ENCODE measurements at regions of chr2 and their contacts with region 1.

Region 1: GRCh38 chr2:224778474-224778877 is 62.3 kb upstream of the CCDC195 start:
- DNase-seq: peak; percentile 22 to 47 (median 26)
- ATAC-seq: peak; percentile 48; the same call in 1 of the 3 replicates
- H3K4me3 ChIP-seq: no peak overlapping the region
- H3K27ac ChIP-seq: no peak overlapping the region
- H3K4me1 ChIP-seq: no peaks in the 10 kb centered on the region
- H3K27me3 ChIP-seq: no peaks in the 10 kb centered on the region
- CTCF ChIP-seq: peak; percentile 35 to 68 (median 48); a peak in 4 of 6 replicates
- EP300 ChIP-seq: no peak
- POLR2A ChIP-seq: no peak
- RAD21 ChIP-seq: peak; percentile 33 to 66; a peak in 3 of 4 replicates

Region 2: DNA sequence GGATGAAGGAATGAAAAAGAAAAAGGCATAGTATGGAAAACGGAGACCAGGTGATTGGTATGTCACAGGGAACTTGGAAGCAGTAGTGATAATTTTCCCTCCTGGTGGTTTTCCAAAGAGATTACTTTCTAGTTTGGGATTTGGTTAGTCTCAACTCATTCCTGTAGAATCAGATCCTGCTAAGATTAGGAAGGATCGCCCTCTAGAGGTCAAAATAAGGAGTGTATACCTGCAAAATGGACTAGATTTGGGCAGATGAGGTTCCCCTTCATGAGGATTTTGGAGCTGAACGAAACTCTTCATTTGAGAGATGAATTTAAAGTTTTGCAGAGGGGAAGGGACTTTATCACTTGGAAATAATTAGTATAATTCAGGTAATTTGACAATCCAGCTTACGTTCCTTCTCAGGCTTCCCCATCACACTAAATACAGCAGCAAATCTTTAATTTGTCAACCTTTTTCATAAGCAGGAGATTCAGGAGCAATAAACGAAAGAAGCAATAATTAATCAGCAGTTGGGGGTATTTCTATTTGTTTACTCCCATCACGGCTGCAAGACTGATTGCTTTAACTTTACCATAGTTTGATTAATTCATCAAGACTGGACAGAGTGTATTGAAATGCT is 127.5 kb before region 1 on chr2:
- CTCF ChIA-PET with region 1: no interaction called
- POLR2A ChIA-PET with region 1: no interaction called
- in situ Hi-C with region 1: no loop called
- intact Hi-C with region 1: loop called (anchors 5 kb)
- DNase-seq: peak; percentile 28 to 53 (median 33)
- ATAC-seq: peak; percentile 88
- H3K4me3 ChIP-seq: no peak overlapping the region
- H3K27ac ChIP-seq: no peak overlapping the region
- H3K4me1 ChIP-seq: no peaks in the 10 kb centered on the region; a peak in 1 of 5 replicates
- H3K27me3 ChIP-seq: no peaks in the 10 kb centered on the region
- CTCF ChIP-seq: peak; percentile 46 to 72 (median 63); a peak in 5 of 6 replicates
- EP300 ChIP-seq: no peak
- POLR2A ChIP-seq: no peak
- RAD21 ChIP-seq: peak; percentile 69 to 80

Region 3: DNA sequence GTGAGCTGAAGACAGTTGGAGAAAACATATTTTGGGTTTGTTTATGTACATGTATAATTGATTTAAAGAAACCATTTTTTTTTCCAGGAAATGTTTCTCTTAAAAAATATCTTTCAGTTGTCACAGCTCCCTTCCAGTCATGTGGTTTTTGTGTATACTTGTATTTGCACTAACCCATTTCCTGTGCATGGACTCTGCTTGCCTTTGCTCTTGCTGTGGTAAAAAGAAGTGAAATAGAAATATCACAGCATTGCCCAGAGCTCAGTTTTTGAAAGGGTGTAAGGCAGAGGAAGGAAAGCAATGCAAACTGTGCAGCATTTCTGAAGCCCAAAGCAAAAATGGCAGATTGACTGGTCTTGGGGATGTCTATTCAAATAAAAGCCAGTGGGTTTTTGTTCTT is 274.2 kb after region 1 on chr2:
- CTCF ChIA-PET with region 1: no interaction called
- POLR2A ChIA-PET with region 1: no interaction called
- in situ Hi-C with region 1: no loop called
- intact Hi-C with region 1: no loop called
- DNase-seq: no peak
- ATAC-seq: no peak
- H3K4me3 ChIP-seq: no peak overlapping the region
- H3K27ac ChIP-seq: no peak overlapping the region
- H3K4me1 ChIP-seq: no peaks in the 10 kb centered on the region
- H3K27me3 ChIP-seq: no peaks in the 10 kb centered on the region
- CTCF ChIP-seq: no peak
- EP300 ChIP-seq: no peak
- POLR2A ChIP-seq: no peak
- RAD21 ChIP-seq: no peak

Measured in K562 (cell line).